ENCODE measurements at regions of chr20 and their contacts with region 1.

Region 1: DNA sequence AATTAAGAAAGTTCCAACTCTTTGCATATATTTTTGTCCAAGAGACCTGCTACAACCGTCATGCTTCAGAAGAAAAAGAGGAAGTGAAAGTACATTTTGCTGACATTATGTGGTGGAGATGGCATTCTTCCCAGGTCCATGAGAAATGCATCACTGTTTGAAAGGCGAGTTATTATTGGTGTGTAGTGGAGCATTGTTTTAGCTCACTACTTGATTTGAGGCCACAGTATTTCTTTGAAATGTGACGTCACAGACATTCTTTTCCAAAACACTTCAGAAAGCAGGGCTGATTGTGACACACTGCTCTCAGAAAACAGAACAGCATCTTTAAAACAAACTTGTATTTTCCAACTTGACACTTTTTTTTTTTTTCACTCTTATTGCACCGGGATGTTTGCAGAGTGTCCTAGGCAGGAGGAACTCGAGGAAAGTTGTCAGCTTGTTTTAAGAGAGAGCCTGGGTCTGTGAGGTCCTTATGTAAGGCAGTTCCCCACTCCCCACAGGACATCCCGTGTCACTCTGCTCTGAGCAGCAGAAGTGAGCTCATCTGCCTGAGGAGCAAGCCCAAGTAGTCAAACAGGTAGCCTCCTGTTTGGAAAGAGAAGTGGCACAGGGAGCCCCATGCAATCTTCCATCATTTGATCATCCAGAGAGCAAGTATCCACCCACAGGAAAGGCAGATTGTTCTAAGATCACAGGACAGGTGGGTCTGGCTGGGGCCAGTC is 1.1 kb downstream of the SPTLC3 start:
- DNase-seq: peak; percentile 86
- ATAC-seq: peak; percentile 46
- H3K4me3 ChIP-seq: peak overlapping the region; percentile 69
- H3K27ac ChIP-seq: peak overlapping the region; percentile 78
- H3K4me1 ChIP-seq: peaks cover 44% of the 10 kb centered on the region
- H3K27me3 ChIP-seq: no peaks in the 10 kb centered on the region
- CTCF ChIP-seq: no peak

Region 2: GRCh38 chr20:12925214-12925755 is 84.6 kb before region 1 on chr20:
- CTCF ChIA-PET with region 1: no interaction called
- POLR2A ChIA-PET with region 1: no interaction called
- intact Hi-C with region 1: loop called (anchors 2 kb)
- DNase-seq: peak; percentile 92
- ATAC-seq: peak; percentile 27
- H3K4me3 ChIP-seq: no peak overlapping the region
- H3K27ac ChIP-seq: no peak overlapping the region
- H3K4me1 ChIP-seq: peaks cover 49% of the 10 kb centered on the region
- H3K27me3 ChIP-seq: no peaks in the 10 kb centered on the region
- CTCF ChIP-seq: peak; percentile 99

Region 3: GRCh38 chr20:12936036-12936435 is 73.8 kb before region 1 on chr20:
- CTCF ChIA-PET with region 1: no interaction called
- POLR2A ChIA-PET with region 1: no interaction called
- intact Hi-C with region 1: no loop called
- DNase-seq: peak; percentile 51
- ATAC-seq: peak; percentile 52
- H3K4me3 ChIP-seq: 0 out of 2 replicates have a peak overlapping the region, but pooled peaks have one; percentile 30
- H3K27ac ChIP-seq: peak overlapping the region; percentile 92
- H3K4me1 ChIP-seq: peaks cover 47% of the 10 kb centered on the region
- H3K27me3 ChIP-seq: no peaks in the 10 kb centered on the region
- CTCF ChIP-seq: no peak

Region 4: DNA sequence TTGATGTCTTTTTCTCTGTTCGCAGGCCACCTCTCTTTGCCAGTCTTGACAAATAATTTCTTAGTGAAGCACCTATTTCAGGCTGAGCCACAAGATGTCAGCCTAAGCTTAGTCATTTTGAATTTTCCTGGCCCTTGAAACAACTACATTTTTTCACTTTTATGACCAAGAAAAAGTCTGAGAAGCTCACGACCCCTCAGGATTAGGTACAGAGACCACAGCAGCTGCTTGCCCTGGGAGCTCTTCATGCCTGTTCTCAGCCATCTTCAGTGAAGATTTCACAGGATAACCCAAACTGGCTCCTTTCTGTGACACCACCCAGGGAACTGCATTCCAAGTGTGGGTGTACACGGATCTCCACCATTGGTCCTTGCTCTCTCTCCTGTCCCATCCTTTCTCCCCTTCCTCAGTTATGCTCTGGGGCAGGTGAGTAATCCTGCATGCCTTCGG is 39.4 kb before region 1 on chr20:
- CTCF ChIA-PET with region 1: no interaction called
- POLR2A ChIA-PET with region 1: no interaction called
- intact Hi-C with region 1: loop called (anchors 1 kb)
- DNase-seq: peak; percentile 84
- ATAC-seq: peak; percentile 17
- H3K4me3 ChIP-seq: no peak overlapping the region
- H3K27ac ChIP-seq: no peak overlapping the region
- H3K4me1 ChIP-seq: peaks cover 34% of the 10 kb centered on the region
- H3K27me3 ChIP-seq: no peaks in the 10 kb centered on the region
- CTCF ChIP-seq: peak; percentile 88

Region 5: DNA sequence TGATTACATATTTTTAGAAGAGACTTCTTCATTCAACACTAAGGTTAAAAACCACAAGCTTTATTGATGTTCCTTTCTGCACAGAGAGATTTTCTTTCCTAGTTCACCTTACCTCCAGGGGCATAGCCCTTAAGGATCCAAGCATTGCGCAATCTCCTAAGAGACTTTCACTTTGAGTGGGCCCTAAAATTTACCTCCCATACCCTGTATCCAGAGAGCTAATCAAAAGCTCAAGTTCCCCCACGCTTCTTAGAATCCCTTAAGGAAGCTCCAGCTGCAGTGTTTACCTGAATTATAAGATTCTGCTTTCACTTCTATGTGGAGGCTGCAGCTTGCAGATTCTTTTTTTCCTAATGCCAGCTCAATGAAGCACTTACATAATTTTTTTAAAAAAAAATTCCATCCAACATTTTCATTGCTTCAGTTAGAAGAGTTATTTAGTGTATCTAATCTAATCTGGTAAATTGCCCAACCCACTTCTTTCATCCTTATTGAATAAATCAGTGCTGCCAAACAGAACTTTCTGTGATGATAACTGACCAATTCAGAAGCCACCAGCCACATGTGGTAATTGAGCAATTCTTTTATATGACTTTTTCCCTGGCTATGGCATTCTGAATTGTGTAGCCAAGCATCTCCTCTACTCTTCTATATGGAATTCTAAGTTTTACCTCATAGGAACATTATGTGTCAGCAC is 25.6 kb before region 1 on chr20:
- CTCF ChIA-PET with region 1: no interaction called
- POLR2A ChIA-PET with region 1: no interaction called
- intact Hi-C with region 1: loop called (anchors 2 kb)
- DNase-seq: peak; percentile 7
- ATAC-seq: peak; percentile 34
- H3K4me3 ChIP-seq: no peak overlapping the region
- H3K27ac ChIP-seq: no peak overlapping the region
- H3K4me1 ChIP-seq: peaks cover 25% of the 10 kb centered on the region
- H3K27me3 ChIP-seq: no peaks in the 10 kb centered on the region
- CTCF ChIP-seq: no peak

Region 6: GRCh38 chr20:13022401-13023155 is 12.7 kb after region 1 on chr20:
- CTCF ChIA-PET with region 1: no interaction called
- POLR2A ChIA-PET with region 1: interaction called, 5 read pairs
- intact Hi-C with region 1: loop called (anchors 1 kb)
- DNase-seq: peak; percentile 91
- ATAC-seq: peak; percentile 66
- H3K4me3 ChIP-seq: peak overlapping the region; percentile 3; the same call in 1 of the 2 replicates
- H3K27ac ChIP-seq: peak overlapping the region; percentile 92
- H3K4me1 ChIP-seq: peaks cover 43% of the 10 kb centered on the region
- H3K27me3 ChIP-seq: no peaks in the 10 kb centered on the region
- CTCF ChIP-seq: no peak

Region 7: DNA sequence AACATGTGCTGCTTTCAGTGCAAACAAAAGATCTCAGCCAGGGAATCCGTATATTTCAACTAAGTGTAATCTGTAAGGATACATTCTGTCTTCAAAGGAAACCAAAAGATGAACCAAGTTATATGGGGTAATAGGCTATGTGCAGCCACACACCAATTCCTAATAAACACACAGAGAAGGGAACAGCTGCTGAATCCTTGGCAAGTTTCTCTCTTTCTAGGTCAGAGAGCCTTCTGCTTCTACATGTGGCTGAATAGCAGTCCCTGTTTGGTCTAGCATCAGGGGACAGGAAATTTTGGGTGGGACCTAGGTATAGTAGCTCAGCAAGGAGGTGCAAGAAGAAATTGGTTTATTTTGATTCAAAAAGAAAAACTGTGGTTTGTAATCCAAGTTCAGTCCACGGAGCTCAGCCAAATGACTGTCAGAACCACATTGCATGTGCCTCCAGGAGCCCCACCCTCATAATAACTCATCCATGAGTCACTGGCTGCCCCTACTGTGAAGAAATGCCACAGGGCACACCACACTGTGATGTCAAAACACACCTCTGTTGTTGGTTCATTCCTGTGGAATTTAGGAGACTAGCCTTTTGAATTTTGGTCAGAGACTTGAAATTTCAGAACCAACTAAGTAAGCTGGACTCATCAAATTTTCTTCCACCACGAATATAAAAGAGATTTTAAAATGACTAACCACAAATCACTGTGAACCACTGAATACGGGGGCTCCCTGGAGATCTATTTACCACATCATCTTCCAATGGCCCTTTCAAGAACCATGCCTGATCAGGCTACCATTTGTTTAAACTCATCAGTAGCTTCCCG is 20.1 kb after region 1 on chr20:
- CTCF ChIA-PET with region 1: interaction called, 3 read pairs
- POLR2A ChIA-PET with region 1: interaction called, 3 read pairs
- intact Hi-C with region 1: loop called (anchors 1 kb)
- DNase-seq: peak; percentile 99
- ATAC-seq: peak; percentile 95
- H3K4me3 ChIP-seq: peak overlapping the region; percentile 51
- H3K27ac ChIP-seq: peak overlapping the region; percentile 88
- H3K4me1 ChIP-seq: peaks cover 43% of the 10 kb centered on the region
- H3K27me3 ChIP-seq: no peaks in the 10 kb centered on the region
- CTCF ChIP-seq: no peak

Region 8: DNA sequence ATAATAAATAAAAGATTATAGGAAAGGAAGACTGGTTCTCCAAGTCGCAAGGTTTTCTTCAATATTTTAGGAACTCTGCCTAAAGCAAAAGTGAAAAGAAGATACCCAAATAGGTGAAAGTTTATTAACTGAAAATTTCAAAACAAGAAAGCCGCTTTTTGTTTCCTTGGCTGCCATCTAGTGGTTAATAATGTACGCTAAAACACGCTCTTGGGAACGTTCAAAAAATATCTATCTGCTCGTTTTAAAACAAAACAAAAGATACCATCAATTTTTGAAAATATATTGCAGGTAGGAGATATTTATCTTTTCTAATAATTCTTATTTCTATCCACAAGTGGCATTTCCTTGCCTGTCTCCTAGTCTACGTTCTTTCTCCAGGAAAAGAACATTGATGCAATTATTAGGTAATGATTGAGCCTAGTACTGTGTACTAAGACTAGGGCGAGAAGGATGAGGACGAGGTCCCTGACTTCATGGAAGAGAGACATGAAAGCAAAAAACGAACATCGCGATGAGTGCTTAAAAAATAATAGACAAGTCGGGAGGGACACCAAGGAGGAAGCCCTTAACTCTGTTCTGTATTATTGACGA is 96.1 kb after region 1 on chr20:
- CTCF ChIA-PET with region 1: no interaction called
- POLR2A ChIA-PET with region 1: no interaction called
- intact Hi-C with region 1: loop called (anchors 1 kb)
- DNase-seq: peak; percentile 84
- ATAC-seq: peak; percentile 23; the same call in 1 of the 2 replicates
- H3K4me3 ChIP-seq: no peak overlapping the region
- H3K27ac ChIP-seq: no peak overlapping the region
- H3K4me1 ChIP-seq: peaks cover 17% of the 10 kb centered on the region
- H3K27me3 ChIP-seq: no peaks in the 10 kb centered on the region
- CTCF ChIP-seq: peak; percentile 89

Measured in PC-3 (cell line).